PC-3 (cell line): ENCODE measurements at regions of chr22 and their contacts with region 1.

Region 1: DNA sequence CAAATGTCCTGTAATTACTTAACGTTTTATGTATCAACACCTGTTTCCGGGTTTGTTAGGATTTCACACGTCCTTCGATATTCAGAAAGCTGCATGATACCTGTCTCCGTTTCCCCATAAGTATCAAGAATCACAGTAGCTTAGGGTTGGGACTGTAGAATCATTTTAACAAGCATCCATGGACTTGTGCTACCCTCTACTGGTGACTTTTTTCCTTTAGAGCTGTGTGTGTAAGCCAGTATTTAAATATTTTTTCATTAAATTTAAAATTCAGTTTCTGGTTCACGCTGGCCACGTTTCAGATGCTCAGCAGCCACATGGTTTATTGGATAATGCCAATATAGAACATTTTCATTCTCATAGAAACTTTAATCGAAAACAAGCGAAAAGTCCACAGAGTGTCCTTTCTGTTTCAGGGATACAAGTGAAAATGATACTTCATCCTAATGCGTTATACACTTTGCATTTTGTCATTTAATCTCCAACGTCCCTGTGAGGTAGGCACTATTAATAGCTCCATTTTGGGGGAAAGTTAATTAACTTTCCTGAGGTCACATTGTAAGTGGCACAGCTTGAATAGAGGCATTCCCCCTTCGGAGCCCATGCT is 61.5 kb upstream of the SLC25A18 start:
- DNase-seq: peak; percentile 73
- ATAC-seq: peak; percentile 80
- H3K4me3 ChIP-seq: no peak overlapping the region
- H3K27ac ChIP-seq: no peak overlapping the region
- H3K4me1 ChIP-seq: no peaks in the 10 kb centered on the region
- H3K27me3 ChIP-seq: peaks cover 33% of the 10 kb centered on the region
- CTCF ChIP-seq: peak; percentile 69

Region 2: DNA sequence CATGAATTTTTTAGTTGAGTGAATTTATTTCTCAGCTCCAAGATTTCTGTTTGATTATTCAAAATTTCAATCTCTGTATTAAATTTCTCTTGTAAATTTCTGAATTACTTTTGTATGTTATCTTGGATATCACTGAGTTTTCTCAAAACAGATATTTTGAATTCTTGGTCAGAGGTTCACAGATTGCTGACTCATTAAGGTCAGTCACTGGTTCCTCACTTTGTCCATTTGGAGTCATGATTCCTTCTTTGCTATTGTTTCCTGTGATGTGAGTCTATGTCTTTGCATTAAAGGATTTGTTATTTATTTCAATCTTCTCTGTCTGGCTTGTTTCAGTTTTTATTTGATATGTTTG is 427.2 kb before region 1 on chr22:
- CTCF ChIA-PET with region 1: interaction called, 13 read pairs
- POLR2A ChIA-PET with region 1: no interaction called
- intact Hi-C with region 1: loop called (anchors 1 kb)
- DNase-seq: no peak
- ATAC-seq: no peak
- H3K4me3 ChIP-seq: no peak overlapping the region
- H3K27ac ChIP-seq: no peak overlapping the region
- H3K4me1 ChIP-seq: no peaks in the 10 kb centered on the region; the same call in 1 of the 2 replicates
- H3K27me3 ChIP-seq: 0 out of 2 replicates have a peak, but pooled peaks cover 6% of the 10 kb centered on the region
- CTCF ChIP-seq: no peak